Mammary epithelial cell (primary cell): ENCODE measurements at regions of chr16 and their contacts with region 1.

Region 1: DNA sequence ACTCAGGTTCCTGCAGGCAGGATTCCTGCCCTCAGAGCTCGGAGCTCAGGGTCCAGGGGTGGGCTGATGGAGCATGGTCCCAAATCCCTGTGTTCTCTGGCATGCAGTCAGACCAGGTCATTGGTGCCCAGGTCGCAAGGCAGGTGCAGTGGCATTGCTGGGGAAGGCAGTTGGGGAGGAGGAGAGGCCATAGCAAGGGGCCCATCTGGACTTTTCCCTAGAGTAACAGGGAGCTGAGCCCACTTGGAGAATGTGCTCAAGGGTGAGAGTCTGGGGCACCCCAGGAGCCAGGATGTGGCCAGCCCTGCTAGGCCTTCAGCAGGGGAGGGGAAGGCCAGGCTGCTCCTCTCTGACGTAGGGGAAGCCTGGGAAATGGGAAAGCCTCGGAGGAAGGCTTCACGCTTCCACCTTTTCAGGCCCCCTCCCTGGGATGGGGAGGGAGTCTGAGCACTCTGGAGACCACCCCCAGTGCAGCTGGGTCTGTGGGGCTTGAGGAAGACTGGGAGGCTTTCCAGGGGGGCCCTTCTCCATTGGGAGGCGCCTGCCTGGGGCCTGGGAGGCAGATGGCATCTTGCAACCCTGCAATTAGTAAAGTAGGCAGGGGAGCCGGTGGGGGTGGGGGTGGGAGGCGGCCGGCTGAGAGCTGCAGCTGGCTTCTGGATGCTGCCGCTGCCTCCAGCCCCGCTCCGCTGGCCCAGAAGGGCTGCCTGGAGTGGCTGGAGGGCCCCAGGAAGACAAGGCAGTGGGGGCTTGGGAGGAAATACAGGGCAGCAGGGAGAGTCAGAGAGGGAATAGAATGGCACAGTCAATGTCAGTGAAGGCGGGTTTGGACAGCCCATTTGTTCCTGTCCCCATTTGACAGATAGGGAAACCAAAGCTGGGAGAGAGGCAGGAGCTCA is 21.1 kb upstream of the DOK4 start:
- DNase-seq: no peak
- H3K4me3 ChIP-seq: no peak overlapping the region
- H3K27ac ChIP-seq: no peak overlapping the region
- H3K4me1 ChIP-seq: no peaks in the 10 kb centered on the region
- H3K27me3 ChIP-seq: no peaks in the 10 kb centered on the region
- CTCF ChIP-seq: no peak

Region 2: DNA sequence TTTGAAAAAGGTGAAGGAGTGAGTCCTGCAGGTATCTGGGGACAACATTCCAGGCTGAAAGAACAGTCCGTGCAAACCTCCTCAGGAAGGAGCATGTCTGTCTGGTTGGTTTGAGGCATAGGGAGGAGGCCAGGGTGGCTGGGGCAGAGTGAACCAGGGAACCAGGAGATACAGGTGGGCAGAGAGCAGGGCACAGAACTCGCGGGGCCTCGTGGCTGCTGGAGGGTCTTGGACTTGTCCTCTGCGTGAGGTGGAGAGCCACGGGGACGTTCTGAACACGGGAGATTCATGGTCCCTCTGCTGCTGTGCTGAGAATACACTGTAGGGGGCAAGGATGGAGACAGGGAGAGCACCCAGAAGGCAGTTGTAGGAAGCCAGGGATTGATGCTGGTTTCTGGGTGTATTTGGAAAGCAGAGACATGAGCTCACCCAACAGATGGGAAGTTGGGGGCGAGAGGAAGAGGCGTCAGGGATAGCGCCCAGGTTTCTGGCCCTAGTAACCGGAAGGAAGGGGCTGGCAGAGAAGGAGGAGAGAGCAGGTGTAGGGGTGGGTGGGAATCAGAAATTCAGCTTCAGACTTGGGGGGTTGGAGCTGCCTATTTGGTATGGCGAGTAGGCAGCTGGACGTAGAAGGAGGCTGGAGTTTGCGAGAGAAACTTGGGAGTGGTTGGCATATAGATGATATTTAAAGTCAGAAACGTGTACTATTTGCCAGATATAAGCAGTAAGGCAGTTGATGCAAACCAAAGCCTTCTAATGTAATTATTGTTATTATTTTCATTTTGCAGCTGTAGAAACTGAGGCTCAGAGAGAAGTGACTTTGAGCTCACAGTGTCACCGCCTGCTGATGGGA is 103.2 kb before region 1 on chr16 and contains the start of gene CCL17:
- CTCF ChIA-PET with region 1: no interaction called
- dilution Hi-C with region 1: no loop called
- in situ Hi-C with region 1: no loop called
- intact Hi-C with region 1: no loop called
- DNase-seq: no peak
- H3K4me3 ChIP-seq: no peak within 1 kb of the TSS
- H3K27ac ChIP-seq: no peak within 1 kb of the TSS
- H3K4me1 ChIP-seq: no peaks in the 10 kb centered on the region
- H3K27me3 ChIP-seq: no peaks in the 10 kb centered on the region
- CTCF ChIP-seq: no peak
- total RNA-seq, gene CCL17: not detected

Region 3: GRCh38 chr16:57416122-57416509 is 91.3 kb before region 1 on chr16:
- CTCF ChIA-PET with region 1: no interaction called
- dilution Hi-C with region 1: loop called (anchors 5 kb)
- in situ Hi-C with region 1: no loop called
- intact Hi-C with region 1: no loop called
- DNase-seq: no peak
- H3K4me3 ChIP-seq: no peak overlapping the region
- H3K27ac ChIP-seq: no peak overlapping the region
- H3K4me1 ChIP-seq: peaks cover 17% of the 10 kb centered on the region
- H3K27me3 ChIP-seq: no peaks in the 10 kb centered on the region
- CTCF ChIP-seq: no peak

Region 4: DNA sequence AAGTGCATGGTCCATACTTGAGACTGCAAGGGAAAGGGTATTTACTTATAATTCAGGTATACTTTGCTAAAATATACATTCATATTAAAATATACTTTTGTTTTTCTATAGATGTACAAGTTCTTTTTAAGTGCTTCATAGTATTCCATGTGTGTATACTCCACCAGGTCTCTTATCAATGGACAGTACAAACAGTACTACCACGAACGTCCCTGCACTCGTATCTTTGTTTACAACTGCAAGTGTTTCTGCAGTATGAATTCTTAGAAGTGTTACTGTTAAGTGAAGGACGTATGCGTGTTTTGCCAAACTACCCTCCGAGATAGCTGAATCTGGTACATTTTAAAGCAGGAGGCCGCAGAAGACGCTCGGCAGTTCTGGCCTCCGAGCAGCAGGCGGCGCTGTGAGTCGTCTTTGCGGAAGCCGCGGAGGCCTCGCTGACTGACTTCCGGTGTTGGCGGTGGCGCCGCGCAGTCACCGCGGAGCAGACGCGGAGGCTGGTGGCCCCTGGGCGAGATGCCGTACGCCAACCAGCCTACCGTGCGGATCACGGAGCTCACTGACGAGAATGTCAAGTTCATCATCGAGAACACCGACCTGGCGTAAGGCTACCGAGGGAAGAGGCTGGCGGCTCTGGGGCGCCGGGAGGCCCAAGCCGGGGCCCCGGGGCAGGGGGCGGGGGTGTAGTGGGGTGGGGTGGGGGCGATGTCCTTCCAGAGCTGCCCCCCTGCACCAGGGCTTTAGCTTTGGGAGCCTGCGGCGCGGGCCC is 45.0 kb before region 1 on chr16 and contains the start of gene POLR2C:
- CTCF ChIA-PET with region 1: no interaction called
- dilution Hi-C with region 1: loop called (anchors 5 kb)
- in situ Hi-C with region 1: no loop called
- intact Hi-C with region 1: no loop called
- DNase-seq: peak; percentile 75
- H3K4me3 ChIP-seq: peak within 1 kb of the TSS; percentile 55 to 94 (median 88)
- H3K27ac ChIP-seq: peak within 1 kb of the TSS; percentile 35
- H3K4me1 ChIP-seq: peaks cover 5% of the 10 kb centered on the region
- H3K27me3 ChIP-seq: no peaks in the 10 kb centered on the region
- CTCF ChIP-seq: peak; percentile 84 to 89
- total RNA-seq, gene POLR2C: 45.1 to 82.2 TPM

Region 5: DNA sequence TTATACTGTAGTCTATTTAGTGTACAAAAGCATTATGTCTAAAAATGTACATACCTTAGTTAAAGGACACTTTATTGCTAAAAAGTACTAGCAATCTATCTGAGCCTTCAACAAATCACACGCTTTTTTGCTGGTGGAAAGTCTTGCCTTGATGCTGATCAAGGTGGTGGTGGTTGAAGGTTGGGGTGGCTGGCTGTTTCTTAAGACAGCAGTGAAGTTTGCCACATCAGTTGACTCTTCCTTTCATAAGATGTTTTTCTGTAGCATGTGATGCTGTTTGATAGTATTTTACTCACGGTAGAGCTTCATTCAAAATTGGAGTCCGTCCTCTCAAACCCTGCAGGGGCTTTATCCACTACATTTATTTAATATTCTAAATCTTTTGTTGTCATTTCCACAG is 43.7 kb after region 1 on chr16:
- CTCF ChIA-PET with region 1: no interaction called
- dilution Hi-C with region 1: loop called (anchors 5 kb)
- in situ Hi-C with region 1: no loop called
- intact Hi-C with region 1: no loop called
- DNase-seq: no peak
- H3K4me3 ChIP-seq: no peak overlapping the region
- H3K27ac ChIP-seq: no peak overlapping the region
- H3K4me1 ChIP-seq: no peaks in the 10 kb centered on the region
- H3K27me3 ChIP-seq: no peaks in the 10 kb centered on the region
- CTCF ChIP-seq: no peak

Region 6: GRCh38 chr16:57639172-57639887 is 131.9 kb after region 1 on chr16:
- CTCF ChIA-PET with region 1: no interaction called
- dilution Hi-C with region 1: loop called (anchors 5 kb)
- in situ Hi-C with region 1: no loop called
- intact Hi-C with region 1: no loop called
- DNase-seq: no peak
- H3K4me3 ChIP-seq: no peak overlapping the region
- H3K27ac ChIP-seq: no peak overlapping the region
- H3K4me1 ChIP-seq: peaks cover 67% of the 10 kb centered on the region
- H3K27me3 ChIP-seq: no peaks in the 10 kb centered on the region
- CTCF ChIP-seq: no peak

Region 7: GRCh38 chr16:57689762-57690558 is 182.6 kb after region 1 on chr16:
- CTCF ChIA-PET with region 1: no interaction called
- dilution Hi-C with region 1: loop called (anchors 5 kb)
- in situ Hi-C with region 1: no loop called
- intact Hi-C with region 1: no loop called
- DNase-seq: no peak
- H3K4me3 ChIP-seq: no peak overlapping the region
- H3K27ac ChIP-seq: no peak overlapping the region
- H3K4me1 ChIP-seq: no peaks in the 10 kb centered on the region
- H3K27me3 ChIP-seq: no peaks in the 10 kb centered on the region
- CTCF ChIP-seq: no peak